ENCODE measurements at regions of chr19 and their contacts with region 1.

Region 1: DNA sequence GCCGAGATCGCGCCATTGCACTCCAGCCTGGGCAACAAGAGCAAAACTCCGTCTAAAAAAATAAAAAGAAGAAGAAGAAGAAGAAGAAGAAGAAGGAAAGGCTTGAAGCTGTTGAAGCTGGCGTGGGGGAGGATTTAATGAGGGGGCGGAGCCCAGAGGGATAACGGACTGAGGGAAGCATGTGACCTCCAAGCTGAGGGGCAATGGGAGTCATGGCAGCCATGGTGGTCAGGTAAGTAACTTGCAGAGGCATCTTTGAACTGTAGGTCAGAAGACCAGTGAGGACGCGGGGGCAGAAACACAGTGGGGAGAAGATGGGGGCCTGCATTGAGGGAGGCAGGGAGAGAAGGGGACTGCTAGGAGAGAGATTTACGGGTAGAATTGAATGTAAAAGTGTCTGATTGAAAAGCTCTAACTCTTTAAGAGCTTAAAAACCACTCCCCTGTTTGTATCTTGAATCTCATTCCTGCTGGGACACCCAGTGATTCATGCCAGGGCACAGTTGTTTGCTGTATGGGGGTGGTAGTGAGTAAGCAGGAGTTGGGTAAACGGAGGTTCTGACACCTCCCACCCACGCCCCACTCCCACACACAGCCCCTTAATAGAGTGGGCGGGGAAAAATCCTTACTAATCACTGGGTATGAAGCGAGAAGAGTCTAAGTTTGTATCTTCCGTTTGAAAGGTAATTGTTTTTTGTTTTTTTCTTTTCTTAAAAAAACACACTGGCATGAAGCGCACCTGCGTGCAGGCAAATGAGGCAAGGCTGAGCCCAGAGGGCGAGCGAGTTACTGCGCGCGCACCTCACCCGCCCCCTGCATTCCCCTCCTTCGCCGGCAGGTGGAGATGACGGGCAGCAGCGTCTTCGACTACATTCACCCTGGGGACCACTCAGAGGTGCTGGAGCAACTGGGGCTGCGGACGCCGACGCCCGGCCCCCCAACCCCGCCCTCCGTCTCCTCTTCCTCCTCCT is 13.0 kb downstream of the TMEM160 start:
- DNase-seq: peak; percentile 98
- H3K4me3 Mint-ChIP-seq: peak overlapping the region; percentile 81
- H3K27ac Mint-ChIP-seq: peak overlapping the region; percentile 73
- H3K4me1 Mint-ChIP-seq: peaks cover 16% of the 10 kb centered on the region
- H3K27me3 Mint-ChIP-seq: peaks cover 10% of the 10 kb centered on the region

Region 2: GRCh38 chr19:46860125-46860845 is 175.1 kb before region 1 on chr19:
- CTCF ChIA-PET with region 1: interaction called, 5 read pairs
- POLR2A ChIA-PET with region 1: no interaction called
- intact Hi-C with region 1: loop called (anchors 1 kb)
- DNase-seq: peak; percentile 98
- H3K4me3 Mint-ChIP-seq: peak overlapping the region; percentile 85
- H3K27ac Mint-ChIP-seq: peak overlapping the region; percentile 91
- H3K4me1 Mint-ChIP-seq: peaks cover 17% of the 10 kb centered on the region
- H3K27me3 Mint-ChIP-seq: no peaks in the 10 kb centered on the region

Region 3: DNA sequence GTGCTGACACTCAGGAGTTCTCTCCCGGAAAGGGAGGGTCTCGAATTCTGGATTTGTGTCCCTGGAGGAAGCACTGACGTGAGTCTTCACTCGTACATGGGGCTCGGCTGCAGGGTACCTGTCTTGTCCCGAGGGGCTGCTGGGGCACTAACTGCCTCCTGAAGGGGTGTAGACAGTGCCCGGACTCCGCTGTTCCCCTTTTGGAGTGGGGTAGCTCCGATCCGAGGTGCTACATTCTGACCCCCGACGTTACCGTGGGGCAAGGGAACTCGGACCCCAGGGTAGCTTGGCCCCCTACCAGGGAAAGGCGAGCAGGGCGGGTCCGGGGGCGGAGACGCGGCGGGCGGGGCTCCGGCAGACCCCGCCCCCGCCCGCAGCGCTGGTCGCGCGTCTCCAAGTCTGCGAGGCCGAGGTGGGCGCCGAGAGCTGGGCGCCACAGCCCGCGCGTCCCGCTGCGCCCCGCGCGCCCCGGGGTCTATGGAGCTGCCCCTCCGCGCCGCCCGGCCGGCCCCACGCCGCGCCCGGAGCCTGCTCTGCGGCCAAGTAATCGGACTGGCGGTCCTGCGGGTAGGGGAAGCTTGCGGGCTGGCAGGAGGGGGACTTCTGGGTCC is 15.9 kb before region 1 on chr19 and contains the start of gene NPAS1:
- CTCF ChIA-PET with region 1: interaction called, 4 read pairs
- POLR2A ChIA-PET with region 1: interaction called, 3 read pairs
- intact Hi-C with region 1: loop called (anchors 2 kb)
- DNase-seq: no peak
- H3K4me3 Mint-ChIP-seq: no peak within 1 kb of the TSS
- H3K27ac Mint-ChIP-seq: no peak within 1 kb of the TSS
- H3K4me1 Mint-ChIP-seq: peaks cover 15% of the 10 kb centered on the region
- H3K27me3 Mint-ChIP-seq: peaks cover 34% of the 10 kb centered on the region
- total RNA-seq, gene NPAS1: not detected

Region 4: GRCh38 chr19:47094557-47095475 is 59.4 kb after region 1 on chr19:
- CTCF ChIA-PET with region 1: interaction called, 4 read pairs
- POLR2A ChIA-PET with region 1: no interaction called
- intact Hi-C with region 1: loop called (anchors 5 kb)
- DNase-seq: peak; percentile 83
- H3K4me3 Mint-ChIP-seq: peak overlapping the region; percentile 77
- H3K27ac Mint-ChIP-seq: peak overlapping the region; percentile 98
- H3K4me1 Mint-ChIP-seq: peaks cover 66% of the 10 kb centered on the region
- H3K27me3 Mint-ChIP-seq: no peaks in the 10 kb centered on the region

Region 5: DNA sequence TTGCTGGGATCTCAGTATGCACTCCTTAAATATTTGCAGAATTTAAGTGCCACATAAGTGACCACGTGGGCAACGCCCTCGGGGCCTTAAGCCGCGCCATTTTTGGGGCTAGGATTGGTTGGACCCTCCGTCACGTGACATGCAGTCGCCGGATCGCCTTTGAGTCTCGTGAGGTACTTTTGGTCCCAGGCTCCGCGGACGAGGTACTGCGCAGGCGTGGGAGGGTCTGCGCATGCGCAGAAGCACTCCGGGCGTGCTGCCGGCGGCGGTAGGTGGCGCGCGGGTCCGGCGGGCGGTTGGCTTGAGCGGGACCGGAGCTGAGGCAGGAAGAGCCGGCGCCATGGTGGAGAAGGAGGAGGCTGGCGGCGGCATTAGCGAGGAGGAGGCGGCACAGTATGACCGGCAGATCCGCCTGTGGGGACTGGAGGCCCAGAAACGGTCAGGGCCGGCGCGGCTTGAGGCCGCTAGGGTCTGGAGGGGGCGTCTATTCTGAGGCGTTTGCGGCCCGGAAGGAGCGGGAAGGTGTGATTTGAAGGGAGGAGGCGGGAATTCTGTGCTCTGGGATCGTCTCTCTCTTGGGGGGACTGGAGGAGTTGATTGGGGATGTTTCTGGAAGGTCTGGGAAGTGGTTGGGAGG is 95.3 kb after region 1 on chr19 and contains the start of gene SAE1:
- CTCF ChIA-PET with region 1: interaction called, 14 read pairs
- POLR2A ChIA-PET with region 1: interaction called, 4 read pairs
- intact Hi-C with region 1: loop called (anchors 1 kb)
- DNase-seq: peak; percentile 97
- H3K4me3 Mint-ChIP-seq: peak within 1 kb of the TSS; percentile 99
- H3K27ac Mint-ChIP-seq: peak within 1 kb of the TSS; percentile 94
- H3K4me1 Mint-ChIP-seq: peaks cover 47% of the 10 kb centered on the region
- H3K27me3 Mint-ChIP-seq: peaks cover 4% of the 10 kb centered on the region
- total RNA-seq, gene SAE1: 154 to 157 TPM

Region 6: GRCh38 chr19:47560999-47561398 is 525.6 kb after region 1 on chr19:
- CTCF ChIA-PET with region 1: no interaction called
- POLR2A ChIA-PET with region 1: no interaction called
- intact Hi-C with region 1: no loop called
- DNase-seq: no peak
- H3K4me3 Mint-ChIP-seq: no peak overlapping the region
- H3K27ac Mint-ChIP-seq: no peak overlapping the region
- H3K4me1 Mint-ChIP-seq: no peaks in the 10 kb centered on the region
- H3K27me3 Mint-ChIP-seq: no peaks in the 10 kb centered on the region

Measured in activated CD4-positive, alpha-beta memory T cell treated with anti-CD3 and anti-CD28 coated beads for 36 hours (primary cell).